Motor neuron (in vitro differentiated cells): ENCODE measurements at regions of chr3 and their contacts with region 1.

Region 1: DNA sequence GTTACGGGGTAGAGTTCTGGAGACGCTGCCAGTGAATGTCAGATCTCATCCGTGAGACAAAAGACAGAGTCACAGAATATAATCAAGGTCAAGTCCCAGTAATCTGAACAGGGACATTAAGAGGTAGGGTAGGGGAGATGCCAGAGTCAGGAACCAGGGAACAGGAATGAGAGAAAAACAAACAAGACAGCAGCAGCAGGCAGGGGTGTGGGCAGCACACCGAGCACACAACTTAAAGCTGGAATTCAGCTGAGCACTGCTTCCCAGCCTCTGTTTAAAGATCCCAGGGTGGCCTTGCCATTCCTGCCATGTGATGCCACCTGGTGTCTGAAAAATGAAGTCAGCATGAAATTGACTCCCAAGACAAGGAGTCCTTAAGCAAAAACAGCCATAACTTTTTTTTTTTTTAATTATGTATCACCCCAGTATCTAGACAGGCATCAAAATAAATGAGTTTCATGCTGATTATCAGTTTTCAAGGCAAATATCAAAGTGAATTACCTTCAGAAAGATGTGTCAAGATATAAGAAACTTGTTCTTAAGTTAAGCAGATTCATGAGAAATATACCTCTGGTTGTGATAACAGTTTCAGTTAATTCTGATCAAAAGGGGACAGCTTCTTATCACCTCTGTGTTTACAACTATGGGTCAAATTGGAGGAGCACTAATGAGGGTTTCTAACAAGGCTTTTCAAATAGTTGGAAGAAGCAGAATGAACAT is 203.7 kb downstream of the SLC9A9 start:
- ATAC-seq: peak; percentile 62 to 99 (median 88)
- H3K4me3 ChIP-seq: no peak overlapping the region
- H3K27ac ChIP-seq: no peak overlapping the region
- H3K4me1 ChIP-seq: peaks cover 6 to 7% of the 10 kb centered on the region in 2 donors

Region 2: GRCh38 chr3:143084856-143085731 is 559.4 kb before region 1 on chr3:
- in situ Hi-C with region 1: loop called in 1 of 9 experiments (anchors 25 kb)
- ATAC-seq: peak in 3 of 8 experiments; percentile 63 to 99 (median 99)
- H3K4me3 ChIP-seq: no peak overlapping the region
- H3K27ac ChIP-seq: no peak overlapping the region
- H3K4me1 ChIP-seq: no peaks in the 10 kb centered on the region

Region 3: DNA sequence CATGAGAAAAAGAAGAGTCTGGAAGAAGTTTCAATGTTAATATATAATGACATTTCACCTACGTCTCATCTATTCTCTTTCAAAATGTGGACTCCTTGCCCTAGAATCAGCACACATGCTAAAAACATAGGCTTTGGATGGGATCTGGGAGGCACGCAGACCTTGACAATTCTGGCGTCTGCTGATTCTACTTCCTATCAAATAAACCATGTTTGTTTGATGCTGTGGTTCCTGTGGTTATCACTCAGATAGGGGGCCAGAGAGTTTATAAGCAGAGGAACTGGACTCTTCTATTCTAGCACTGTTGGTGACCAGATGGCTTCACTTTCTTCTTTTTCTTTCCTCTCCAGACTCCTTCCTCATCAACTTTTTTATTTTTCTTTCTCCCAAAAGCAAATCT is 663.9 kb after region 1 on chr3:
- in situ Hi-C with region 1: no loop called
- ATAC-seq: peak in 1 of 8 experiments; percentile 35
- H3K4me3 ChIP-seq: no peak overlapping the region
- H3K27ac ChIP-seq: no peak overlapping the region
- H3K4me1 ChIP-seq: no peaks in the 10 kb centered on the region